Activated CD4-positive, alpha-beta memory T cell treated with anti-CD3 and anti-CD28 coated beads for 36 hours (primary cell): ENCODE measurements at regions of chr3 and their contacts with region 1.

Region 1: DNA sequence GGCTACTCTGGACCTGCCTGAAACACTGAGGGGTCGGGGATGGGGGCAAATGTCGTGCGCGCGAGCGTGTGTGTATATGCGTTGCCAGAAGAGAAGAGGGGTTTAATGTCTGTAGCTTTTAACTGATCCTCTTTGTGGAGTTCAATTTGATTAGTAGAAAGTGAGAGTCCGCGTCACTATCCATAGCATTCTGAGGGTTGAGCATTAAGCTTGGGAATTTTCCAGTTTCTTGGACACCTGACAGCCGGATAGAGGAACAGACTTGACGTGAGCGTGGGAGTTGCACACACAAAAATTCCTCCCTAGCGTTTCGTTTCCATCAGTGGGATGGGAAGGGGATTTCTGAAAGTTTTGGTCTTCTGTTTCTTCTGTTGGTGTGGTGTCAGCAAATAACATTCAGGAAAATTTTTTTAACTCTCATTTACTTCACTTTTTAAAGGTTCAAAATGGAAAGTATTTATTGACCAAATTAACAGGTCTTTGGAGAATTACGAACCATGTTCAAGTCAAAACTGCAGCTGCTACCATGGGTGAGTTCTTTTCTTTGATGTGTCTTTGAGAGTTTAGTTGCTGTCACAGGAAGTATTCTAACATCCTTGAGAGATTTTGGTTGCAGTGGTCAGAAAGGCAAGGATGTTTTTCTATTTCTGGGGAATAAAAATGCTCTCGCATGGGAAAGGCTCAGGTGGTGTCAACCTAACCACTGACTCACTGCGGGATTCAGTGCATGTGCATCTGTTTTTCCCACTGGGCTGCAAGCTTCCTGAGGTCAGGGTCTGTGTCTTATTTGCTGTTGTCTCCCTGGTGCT is 822 bp downstream of the POGLUT1 start:
- DNase-seq: no peak
- H3K4me3 Mint-ChIP-seq: peak overlapping the region; percentile 95
- H3K27ac Mint-ChIP-seq: peak overlapping the region; percentile 92
- H3K4me1 Mint-ChIP-seq: peaks cover 29% of the 10 kb centered on the region
- H3K27me3 Mint-ChIP-seq: no peaks in the 10 kb centered on the region

Region 2: DNA sequence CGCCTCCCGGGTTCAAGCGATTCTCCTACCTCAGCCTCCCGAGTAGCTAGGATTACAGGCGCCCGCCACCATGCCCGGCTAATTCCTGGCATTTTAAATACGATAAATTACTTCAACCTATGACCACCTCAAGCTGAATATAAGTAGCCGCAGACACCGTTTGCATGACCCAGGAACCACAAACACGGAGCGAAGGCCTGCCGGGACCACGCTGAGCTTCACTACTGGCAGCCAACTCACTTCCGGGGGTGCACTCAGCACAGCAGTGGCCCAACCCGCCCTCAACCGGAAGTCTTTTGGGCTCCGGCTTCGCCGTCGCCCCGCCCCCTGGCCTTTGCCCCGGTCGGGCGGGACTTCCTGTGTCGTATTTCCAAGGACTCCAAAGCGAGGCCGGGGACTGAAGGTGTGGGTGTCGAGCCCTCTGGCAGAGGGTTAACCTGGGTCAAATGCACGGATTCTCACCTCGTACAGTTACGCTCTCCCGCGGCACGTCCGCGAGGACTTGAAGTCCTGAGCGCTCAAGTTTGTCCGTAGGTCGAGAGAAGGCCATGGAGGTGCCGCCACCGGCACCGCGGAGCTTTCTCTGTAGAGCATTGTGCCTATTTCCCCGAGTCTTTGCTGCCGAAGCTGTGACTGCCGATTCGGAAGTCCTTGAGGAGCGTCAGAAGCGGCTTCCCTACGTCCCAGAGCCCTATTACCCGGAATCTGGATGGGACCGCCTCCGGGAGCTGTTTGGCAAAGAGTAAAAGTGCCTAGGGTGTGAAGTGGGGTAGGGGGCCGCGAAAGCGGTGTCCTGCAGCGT is 28.8 kb after region 1 on chr3 and contains the start of gene TIMMDC1:
- CTCF ChIA-PET with region 1: interaction called, 3 read pairs
- POLR2A ChIA-PET with region 1: interaction called, 42 read pairs
- intact Hi-C with region 1: loop called (anchors 1 kb)
- DNase-seq: peak; percentile 98
- H3K4me3 Mint-ChIP-seq: peak within 1 kb of the TSS; percentile 98
- H3K27ac Mint-ChIP-seq: peak within 1 kb of the TSS; percentile 96
- H3K4me1 Mint-ChIP-seq: peaks cover 29% of the 10 kb centered on the region
- H3K27me3 Mint-ChIP-seq: no peaks in the 10 kb centered on the region
- total RNA-seq, gene TIMMDC1: 93.7 to 105 TPM